Ovary (tissue), 10 donors: ENCODE measurements at regions of chr5 and their contacts with region 1.

Region 1: DNA sequence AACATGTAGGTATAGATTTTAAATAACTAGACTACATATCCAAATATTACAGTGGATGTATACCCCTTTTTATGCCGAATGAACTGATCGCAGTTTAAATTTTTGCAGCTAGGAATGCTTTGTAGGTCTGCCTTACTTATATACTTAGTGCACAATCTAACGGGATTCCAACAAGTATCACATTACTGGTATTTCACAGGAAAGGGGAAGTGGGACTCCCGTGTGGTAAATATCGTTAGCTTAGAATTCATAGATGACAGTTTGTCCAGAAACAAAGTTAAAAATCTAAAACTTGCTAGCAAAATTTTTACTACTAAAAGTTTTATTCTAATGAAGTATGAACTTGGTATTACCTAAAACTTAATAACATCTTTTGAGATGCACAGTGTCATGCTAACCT is 193.5 kb upstream of the TLX3 start:
- DNase-seq: no peak
- H3K4me3 ChIP-seq: no peak overlapping the region
- H3K27ac ChIP-seq: no peak overlapping the region
- H3K4me1 ChIP-seq: no peaks in the 10 kb centered on the region
- H3K27me3 ChIP-seq: no peaks in the 10 kb centered on the region
- CTCF ChIP-seq: no peak
- EP300 ChIP-seq: no peak
- POLR2A ChIP-seq: no peak

Region 2: DNA sequence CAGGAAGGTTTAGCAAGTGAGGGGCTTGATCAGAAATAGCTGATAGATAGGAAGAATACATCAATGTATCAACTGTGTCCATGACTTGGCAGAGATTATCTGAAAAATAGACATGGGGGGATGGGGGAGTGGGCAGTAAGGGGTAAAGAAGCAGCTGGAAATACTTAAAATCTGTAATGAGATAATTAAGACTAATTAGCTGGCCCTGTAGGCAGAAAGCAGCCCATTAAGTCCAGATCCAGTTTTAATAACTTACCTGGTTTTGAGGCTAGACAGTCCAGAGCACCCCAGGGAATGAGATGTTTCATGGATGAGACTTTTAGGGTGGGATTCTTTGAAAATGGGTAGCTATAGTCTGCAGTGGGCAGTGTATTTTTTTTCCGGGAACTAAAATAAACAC is 76.6 kb after region 1 on chr5:
- intact Hi-C with region 1: loop called in 1 of 4 experiments (anchors 5 kb)
- DNase-seq: no peak
- H3K4me3 ChIP-seq: no peak overlapping the region
- H3K27ac ChIP-seq: no peak overlapping the region
- H3K4me1 ChIP-seq: no peaks in the 10 kb centered on the region
- H3K27me3 ChIP-seq: no peaks in the 10 kb centered on the region
- CTCF ChIP-seq: no peak
- EP300 ChIP-seq: no peak
- POLR2A ChIP-seq: no peak

Region 3: DNA sequence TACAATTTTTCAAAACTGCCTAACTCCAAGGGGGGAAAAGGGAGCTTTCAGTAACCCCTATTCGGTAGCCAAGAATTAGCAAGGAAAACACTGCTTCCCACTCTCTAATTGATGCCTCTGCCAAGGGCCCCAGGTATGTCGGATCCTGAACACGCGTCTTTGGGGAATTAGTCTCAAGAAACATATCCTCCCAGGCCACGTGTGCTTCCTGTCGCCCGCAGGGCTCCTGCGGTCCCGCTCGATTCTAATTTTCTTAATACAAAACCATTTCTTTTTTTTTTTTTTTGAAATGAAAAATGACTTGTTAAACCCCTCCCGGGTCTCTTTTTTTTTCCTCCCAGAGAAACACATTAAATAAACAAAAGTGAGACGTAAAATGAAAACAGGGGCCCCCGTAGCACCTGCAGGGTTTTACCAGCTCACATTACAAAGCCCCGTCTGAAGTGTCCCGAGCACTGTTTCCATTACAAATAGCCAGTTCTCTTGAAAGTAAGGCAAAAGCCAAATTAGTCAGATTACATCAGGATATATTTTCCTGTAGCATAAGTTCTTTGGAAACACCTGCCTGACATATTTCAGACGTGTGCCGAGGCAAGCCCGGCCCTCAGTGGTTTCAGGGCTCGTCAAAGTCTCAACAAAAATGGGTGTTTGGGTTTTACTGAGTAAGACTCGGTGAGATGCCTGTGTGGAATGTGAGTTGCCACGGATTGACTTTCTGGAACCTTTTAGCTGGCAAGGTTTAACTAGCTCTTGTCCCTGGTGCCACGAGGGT is 691.6 kb after region 1 on chr5:
- intact Hi-C with region 1: no loop called
- DNase-seq: no peak
- H3K4me3 ChIP-seq: no peak overlapping the region
- H3K27ac ChIP-seq: no peak overlapping the region
- H3K4me1 ChIP-seq: no peaks in the 10 kb centered on the region
- H3K27me3 ChIP-seq: no peaks in the 10 kb centered on the region
- CTCF ChIP-seq: no peak
- EP300 ChIP-seq: no peak
- POLR2A ChIP-seq: no peak